ENCODE measurements at regions of chr1 and their contacts with region 1.

Region 1: GRCh38 chr1:46616277-46617107 is at the start of gene MOB3C:
- DNase-seq: peak; percentile 54
- H3K4me3 Mint-ChIP-seq: peak within 1 kb of the TSS; percentile 87
- H3K27ac Mint-ChIP-seq: peak within 1 kb of the TSS; percentile 92
- H3K4me1 Mint-ChIP-seq: peaks cover 69% of the 10 kb centered on the region
- H3K27me3 Mint-ChIP-seq: no peaks in the 10 kb centered on the region
- total RNA-seq, gene MOB3C: 16.0 and 17.5 TPM in 2 replicates

Region 2: DNA sequence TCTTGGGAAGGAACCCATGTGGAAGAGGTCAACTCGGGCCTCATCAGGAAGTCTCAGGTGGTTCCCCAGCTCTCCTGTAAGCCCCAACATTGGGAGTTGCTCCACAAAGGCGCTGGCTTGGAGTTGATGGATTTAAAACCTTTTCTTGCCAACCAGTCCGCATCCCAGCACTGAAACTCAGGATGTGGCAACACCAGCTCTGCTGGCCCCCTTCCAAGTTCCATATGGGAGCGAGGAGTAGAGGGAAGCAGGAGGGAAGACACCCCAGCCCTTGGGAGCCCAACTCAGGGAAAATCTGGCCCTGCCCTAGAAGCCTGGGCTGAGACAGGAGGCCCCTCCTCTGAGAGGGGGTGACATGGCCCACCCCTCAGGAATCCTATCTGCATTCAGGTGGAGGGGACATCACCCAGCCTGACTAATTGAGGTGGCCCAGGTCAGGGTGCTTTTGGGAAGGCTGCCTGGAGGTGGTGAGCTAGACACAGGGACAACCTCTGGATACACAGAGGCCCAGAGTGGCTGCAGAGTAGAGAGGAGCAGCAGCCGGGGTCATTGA is 160.0 kb before region 1 on chr1:
- intact Hi-C with region 1: no loop called
- DNase-seq: no peak
- H3K4me3 Mint-ChIP-seq: no peak overlapping the region
- H3K27ac Mint-ChIP-seq: no peak overlapping the region
- H3K4me1 Mint-ChIP-seq: no peaks in the 10 kb centered on the region
- H3K27me3 Mint-ChIP-seq: peaks cover 28% of the 10 kb centered on the region

Region 3: DNA sequence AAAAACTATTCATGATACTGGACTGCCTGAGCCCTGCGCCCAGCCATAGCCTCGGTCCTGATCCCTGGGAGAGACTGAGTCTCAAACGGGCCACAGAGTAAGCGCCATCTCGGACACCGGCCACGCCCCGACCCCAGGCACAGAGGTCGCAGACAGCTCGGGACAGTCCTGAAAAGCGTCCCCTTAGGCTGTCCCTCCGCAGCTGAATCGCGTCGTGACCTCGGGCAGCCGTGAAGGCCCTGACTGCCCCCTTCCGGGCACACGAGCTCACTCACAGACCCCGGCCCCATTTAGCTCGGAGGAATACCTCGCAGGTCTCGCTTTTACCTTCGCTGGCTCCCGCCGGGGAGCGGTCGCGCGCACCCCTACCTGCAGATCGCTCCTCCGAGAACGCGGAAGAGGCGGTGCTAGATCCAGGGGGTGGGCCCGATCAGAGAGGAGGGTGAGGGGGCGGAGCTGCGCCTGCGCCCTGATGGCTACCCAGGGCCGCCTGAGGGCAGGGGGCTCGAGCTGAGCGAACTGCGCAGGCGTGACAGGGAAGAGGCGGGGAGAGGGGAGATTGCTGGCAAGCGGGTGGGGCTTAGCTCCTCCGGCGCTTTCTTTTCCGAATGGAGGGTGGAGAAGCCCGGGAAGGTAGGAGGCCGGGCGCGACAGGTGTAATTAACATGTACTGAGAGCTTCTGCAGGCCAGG is 12.5 kb before region 1 on chr1 and contains the start of gene MKNK1:
- intact Hi-C with region 1: loop called (anchors 1 kb)
- DNase-seq: peak; percentile 97
- H3K4me3 Mint-ChIP-seq: peak within 1 kb of the TSS; percentile 87
- H3K27ac Mint-ChIP-seq: peak within 1 kb of the TSS; percentile 75
- H3K4me1 Mint-ChIP-seq: peaks cover 54% of the 10 kb centered on the region
- H3K27me3 Mint-ChIP-seq: no peaks in the 10 kb centered on the region
- total RNA-seq, gene MKNK1: 45.2 and 48.1 TPM in 2 replicates

Region 4: GRCh38 chr1:46643368-46643775 is 26.9 kb after region 1 on chr1:
- intact Hi-C with region 1: no loop called
- DNase-seq: no peak
- H3K4me3 Mint-ChIP-seq: no peak overlapping the region
- H3K27ac Mint-ChIP-seq: no peak overlapping the region
- H3K4me1 Mint-ChIP-seq: peaks cover 9% of the 10 kb centered on the region
- H3K27me3 Mint-ChIP-seq: no peaks in the 10 kb centered on the region

Region 5: GRCh38 chr1:46653405-46653958 is 37.0 kb after region 1 on chr1:
- intact Hi-C with region 1: loop called (anchors 5 kb)
- DNase-seq: no peak
- H3K4me3 Mint-ChIP-seq: no peak overlapping the region
- H3K27ac Mint-ChIP-seq: peak overlapping the region; percentile 70
- H3K4me1 Mint-ChIP-seq: peaks cover 25% of the 10 kb centered on the region
- H3K27me3 Mint-ChIP-seq: no peaks in the 10 kb centered on the region

Region 6: DNA sequence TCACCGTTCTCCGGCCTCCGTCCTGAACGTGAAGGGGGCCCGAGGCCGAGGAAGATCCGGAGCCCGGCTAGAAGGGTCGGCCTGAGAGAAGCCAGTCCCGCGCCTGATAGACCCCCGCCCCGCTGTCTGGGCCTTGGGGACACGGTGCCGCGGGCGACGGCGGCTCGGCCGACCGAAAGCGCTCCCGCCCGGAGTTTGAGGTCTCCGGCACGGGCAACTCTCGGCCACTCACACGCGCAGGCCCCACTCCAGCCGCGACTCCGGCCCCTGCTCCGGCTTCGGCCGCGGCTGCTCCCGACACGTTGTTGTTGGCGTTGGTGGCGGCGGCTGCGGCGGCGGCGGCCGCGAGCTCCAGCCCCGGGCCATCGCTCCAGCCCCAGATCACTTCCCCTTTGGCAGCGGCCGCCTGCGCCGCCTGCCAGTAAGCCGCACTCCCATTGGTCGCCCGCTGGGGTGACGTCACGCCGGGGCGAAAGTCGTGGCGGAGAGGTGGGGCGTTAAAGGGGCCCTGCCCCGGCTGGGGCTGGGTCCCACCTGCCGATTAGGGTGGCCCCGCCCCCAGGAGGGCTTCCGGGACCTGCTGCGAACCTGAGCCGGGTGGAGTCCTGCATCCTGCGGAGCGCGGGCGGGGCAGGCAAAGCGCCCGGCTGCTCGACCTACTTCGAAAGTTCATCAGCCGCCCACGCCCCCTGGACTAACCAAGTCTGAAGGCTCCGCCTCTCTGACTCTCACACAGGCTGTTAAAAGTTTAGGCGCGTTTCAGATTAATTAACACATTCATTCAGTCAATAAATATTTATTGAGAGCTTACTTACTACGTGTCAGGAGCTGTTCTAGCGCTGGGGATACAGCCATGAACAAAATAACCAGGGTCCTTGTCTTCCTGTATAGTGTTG is 102.5 kb after region 1 on chr1 and contains the start of gene EFCAB14:
- intact Hi-C with region 1: loop called (anchors 5 kb)
- DNase-seq: peak; percentile 98
- H3K4me3 Mint-ChIP-seq: peak within 1 kb of the TSS; percentile 95
- H3K27ac Mint-ChIP-seq: peak within 1 kb of the TSS; percentile 92
- H3K4me1 Mint-ChIP-seq: peaks cover 36% of the 10 kb centered on the region
- H3K27me3 Mint-ChIP-seq: no peaks in the 10 kb centered on the region
- total RNA-seq, gene EFCAB14: 69.1 and 71.3 TPM in 2 replicates

Measured in activated T-helper 2 cell treated with anti-CD3 and anti-CD28 coated beads, Interferon-gamma antibody, Interleukin-2, Interleukin-4, amounts not matched to agents 10 μg/mL and 5 μg/mL and 100 μg/mL, durations not matched to agents 14 hours and 24 hours and 36 hours (primary cell).